B cell (primary cell): ENCODE measurements at regions of chr5 and their contacts with region 1.

Region 1: GRCh38 chr5:135457424-135458071 is 5.4 kb upstream of the TIFAB start:
- DNase-seq: peak; percentile 58
- ATAC-seq: no peak
- H3K4me3 ChIP-seq: no peak overlapping the region
- H3K4me3 Mint-ChIP-seq: no peak overlapping the region
- H3K27ac ChIP-seq: no peak overlapping the region
- H3K27ac Mint-ChIP-seq: no peak overlapping the region
- H3K4me1 ChIP-seq: no peaks in the 10 kb centered on the region
- H3K4me1 Mint-ChIP-seq: peaks cover 3% of the 10 kb centered on the region
- H3K27me3 ChIP-seq: peaks cover 0 to 6% (median 2%) of the 10 kb centered on the region in 4 experiments
- H3K27me3 Mint-ChIP-seq: peaks cover 36% of the 10 kb centered on the region
- CTCF ChIP-seq: peak; percentile 84

Region 2: DNA sequence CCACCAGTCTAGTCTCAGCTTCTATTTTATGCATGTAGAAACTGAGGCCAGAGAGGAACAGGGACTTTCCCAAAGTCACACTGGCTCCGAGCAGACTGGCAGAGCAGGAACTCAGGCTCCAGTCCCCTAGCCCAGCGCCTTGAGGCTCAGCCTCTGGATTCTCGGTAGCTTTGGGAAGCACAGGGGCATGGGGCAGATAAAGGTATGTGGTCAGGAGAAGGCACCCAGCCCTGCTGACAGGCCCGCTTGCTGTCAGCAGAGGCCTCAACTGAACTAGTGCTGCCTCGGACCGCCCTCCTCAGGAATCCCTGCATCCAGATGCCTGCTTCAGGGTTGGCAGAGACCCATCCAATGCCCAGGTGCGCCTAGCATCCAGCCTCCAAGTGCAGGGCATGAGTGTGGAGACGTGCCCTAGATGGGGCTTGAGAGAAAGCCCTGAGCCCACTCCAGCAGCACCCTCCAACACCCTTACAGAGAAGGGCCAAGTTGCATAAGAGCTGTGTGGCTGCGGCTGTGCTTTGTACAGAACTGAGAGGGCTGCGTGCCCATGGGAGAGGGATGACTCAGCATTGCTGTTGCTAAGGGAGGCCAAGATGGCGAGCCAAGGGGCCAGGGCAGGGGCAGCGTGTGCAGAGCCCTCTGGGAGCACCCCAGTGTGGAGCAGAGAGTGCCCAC is 227.2 kb before region 1 on chr5:
- CTCF ChIA-PET with region 1: no interaction called
- POLR2A ChIA-PET with region 1: no interaction called
- intact Hi-C with region 1: no loop called
- DNase-seq: no peak
- ATAC-seq: no peak
- H3K4me3 ChIP-seq: no peak overlapping the region
- H3K4me3 Mint-ChIP-seq: no peak overlapping the region
- H3K27ac ChIP-seq: no peak overlapping the region
- H3K27ac Mint-ChIP-seq: no peak overlapping the region
- H3K4me1 ChIP-seq: no peaks in the 10 kb centered on the region
- H3K4me1 Mint-ChIP-seq: no peaks in the 10 kb centered on the region
- H3K27me3 ChIP-seq: peaks cover 0 to 4% (median 0%) of the 10 kb centered on the region in 4 experiments
- H3K27me3 Mint-ChIP-seq: peaks cover 20% of the 10 kb centered on the region
- CTCF ChIP-seq: no peak

Region 3: DNA sequence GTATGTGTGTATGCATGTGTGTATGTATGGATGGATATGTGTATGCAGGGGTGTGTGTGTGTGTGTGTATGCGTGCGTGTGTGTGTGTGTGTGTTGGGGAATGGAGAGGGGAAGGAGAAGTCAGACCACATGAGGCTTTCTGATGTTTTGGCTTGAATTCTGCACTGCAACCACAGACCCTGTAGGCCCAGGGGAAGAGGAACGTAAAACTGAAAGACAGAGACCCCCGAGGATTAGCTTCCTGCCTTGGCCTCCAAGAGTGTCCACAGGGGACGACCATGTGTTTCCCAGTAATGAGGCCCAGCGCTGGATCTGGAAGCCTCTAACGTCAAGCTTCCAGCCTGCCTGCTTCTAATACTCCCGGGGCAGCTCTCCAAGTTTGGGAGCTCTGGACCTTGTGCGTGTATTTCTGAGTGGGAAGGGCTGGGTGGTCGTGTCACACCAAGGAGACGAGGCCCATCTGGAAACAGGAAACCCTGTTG is 16.2 kb before region 1 on chr5:
- CTCF ChIA-PET with region 1: interaction called, 13 read pairs
- POLR2A ChIA-PET with region 1: no interaction called
- intact Hi-C with region 1: no loop called
- DNase-seq: no peak
- ATAC-seq: no peak
- H3K4me3 ChIP-seq: no peak overlapping the region
- H3K4me3 Mint-ChIP-seq: no peak overlapping the region
- H3K27ac ChIP-seq: no peak overlapping the region
- H3K27ac Mint-ChIP-seq: no peak overlapping the region
- H3K4me1 ChIP-seq: peaks cover 14 to 34% of the 10 kb centered on the region in 2 donors
- H3K4me1 Mint-ChIP-seq: peaks cover 23% of the 10 kb centered on the region
- H3K27me3 ChIP-seq: peaks cover 0 to 20% (median 0%) of the 10 kb centered on the region in 4 experiments
- H3K27me3 Mint-ChIP-seq: peaks cover 20% of the 10 kb centered on the region
- CTCF ChIP-seq: no peak